AG04449 (cell line): ENCODE measurements at regions of chr16 and their contacts with region 1.

Region 1: DNA sequence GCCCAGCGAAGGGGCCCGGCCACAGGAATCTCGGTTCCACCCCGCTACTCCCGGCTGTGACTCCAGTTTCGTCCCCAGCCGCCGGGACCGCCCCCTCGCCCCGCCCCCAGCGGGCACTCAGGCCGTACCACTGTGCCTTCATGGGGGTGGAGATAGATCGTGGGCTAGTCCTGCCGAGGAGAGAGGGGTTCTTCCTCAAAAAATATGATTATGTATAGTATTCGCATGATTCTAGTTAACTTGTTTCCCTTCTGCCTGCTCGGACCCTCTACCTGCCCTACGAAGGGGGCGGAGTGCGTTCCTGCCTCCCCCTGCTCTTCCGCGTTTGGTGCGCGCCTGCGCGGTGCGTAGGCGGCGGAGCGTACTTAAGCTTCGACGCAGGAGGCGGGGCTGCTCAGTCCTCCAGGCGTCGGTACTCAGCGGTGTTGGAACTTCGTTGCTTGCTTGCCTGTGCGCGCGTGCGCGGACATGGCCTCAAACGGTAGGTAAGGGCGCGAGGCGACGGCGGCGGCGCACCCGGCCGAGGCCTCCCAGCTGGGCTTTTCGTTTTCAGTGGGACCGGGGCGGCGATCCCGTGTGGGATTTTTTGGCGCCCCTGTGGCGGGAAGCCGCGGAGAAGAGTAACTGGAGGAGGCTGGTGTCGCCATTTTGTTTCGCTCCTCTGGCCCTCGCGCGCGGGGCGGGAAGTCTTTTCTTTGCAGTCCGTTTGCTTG is at the start of gene FUS:
- DNase-seq: peak; percentile 47
- H3K4me3 ChIP-seq: peak within 1 kb of the TSS; percentile 95
- CTCF ChIP-seq: no peak

Region 2: DNA sequence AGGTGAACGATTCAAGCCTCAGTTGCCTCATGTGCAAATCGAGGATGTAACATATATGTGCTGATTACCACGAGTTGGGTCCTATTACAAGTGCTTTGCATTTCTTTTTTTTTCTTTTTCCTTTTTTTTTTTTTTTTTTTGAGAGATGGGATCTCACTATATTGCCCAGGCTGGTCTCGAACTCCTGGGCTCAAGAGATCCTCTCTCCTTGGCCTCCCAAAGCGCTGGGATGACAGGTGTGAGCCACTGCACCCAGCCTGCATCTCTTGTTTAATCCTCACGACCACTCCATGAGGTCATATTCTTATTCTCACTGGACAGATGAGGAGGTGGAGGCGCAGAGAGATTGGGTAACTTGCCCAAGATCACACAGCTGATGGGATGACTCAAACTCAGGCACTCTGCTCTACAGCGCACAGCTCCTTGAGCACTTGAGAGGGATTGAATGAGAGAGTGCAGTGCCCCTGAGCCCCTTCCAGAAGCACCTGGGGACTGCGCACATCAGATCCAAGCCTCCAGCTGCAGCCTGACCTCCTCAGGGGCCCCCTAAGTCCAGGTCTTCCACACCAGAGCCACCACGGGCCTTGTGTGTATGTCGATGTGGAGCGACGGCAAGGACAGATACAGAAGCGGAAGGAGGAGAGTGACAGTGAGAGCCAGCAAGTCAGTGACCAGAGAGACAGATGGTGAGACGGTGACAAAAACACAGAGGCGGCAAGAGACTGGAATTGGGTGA is 174.4 kb before region 1 on chr16:
- CTCF ChIA-PET with region 1: no interaction called
- POLR2A ChIA-PET with region 1: no interaction called
- DNase-seq: no peak
- H3K4me3 ChIP-seq: no peak overlapping the region
- CTCF ChIP-seq: no peak

Region 3: GRCh38 chr16:31117391-31118197 is 62.3 kb before region 1 on chr16 and contains the start of gene KAT8:
- CTCF ChIA-PET with region 1: no interaction called
- POLR2A ChIA-PET with region 1: interaction called, 12 read pairs
- DNase-seq: peak; percentile 81
- H3K4me3 ChIP-seq: peak within 1 kb of the TSS; percentile 60
- CTCF ChIP-seq: no peak

Region 4: GRCh38 chr16:31168848-31169247 is 11.1 kb before region 1 on chr16:
- CTCF ChIA-PET with region 1: interaction called, 3 read pairs
- POLR2A ChIA-PET with region 1: interaction called, 11 read pairs
- DNase-seq: no peak
- H3K4me3 ChIP-seq: no peak overlapping the region
- CTCF ChIP-seq: no peak

Region 5: GRCh38 chr16:31440516-31441184 is 260.7 kb after region 1 on chr16:
- CTCF ChIA-PET with region 1: interaction called, 4 read pairs
- POLR2A ChIA-PET with region 1: interaction called, 14 read pairs
- DNase-seq: no peak
- H3K4me3 ChIP-seq: no peak overlapping the region
- CTCF ChIP-seq: no peak